MCF 10A (cell line): ENCODE measurements at regions of chr20 and their contacts with region 1.

Region 1: DNA sequence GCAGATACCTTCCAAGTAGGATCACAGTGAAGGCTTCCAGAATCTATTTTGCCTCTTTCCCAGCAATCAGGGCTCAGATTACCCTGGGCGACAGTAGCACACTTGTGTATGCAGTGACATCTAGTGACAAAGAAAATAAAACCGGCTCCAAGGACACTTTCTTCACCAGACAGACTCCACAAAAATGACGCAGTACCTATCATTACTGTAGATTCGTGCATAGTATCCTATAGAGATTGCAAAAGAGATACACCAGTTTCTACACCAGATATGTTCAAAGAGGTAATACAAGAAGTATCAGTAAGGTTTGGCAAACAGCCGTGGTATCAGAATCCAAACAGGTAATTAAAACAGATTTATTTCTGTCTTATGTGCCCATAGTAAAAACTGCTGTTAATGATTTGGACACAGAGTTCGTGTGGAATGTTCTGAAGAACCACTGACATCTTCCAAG is 600.4 kb upstream of the JAG1 start:
- DNase-seq: peak; percentile 78
- H3K4me3 Mint-ChIP-seq: no peak overlapping the region
- H3K27ac Mint-ChIP-seq: peak overlapping the region; percentile 29
- H3K4me1 Mint-ChIP-seq: peaks cover 6% of the 10 kb centered on the region
- H3K27me3 Mint-ChIP-seq: no peaks in the 10 kb centered on the region
- CTCF ChIP-seq: peak; percentile 59

Region 2: DNA sequence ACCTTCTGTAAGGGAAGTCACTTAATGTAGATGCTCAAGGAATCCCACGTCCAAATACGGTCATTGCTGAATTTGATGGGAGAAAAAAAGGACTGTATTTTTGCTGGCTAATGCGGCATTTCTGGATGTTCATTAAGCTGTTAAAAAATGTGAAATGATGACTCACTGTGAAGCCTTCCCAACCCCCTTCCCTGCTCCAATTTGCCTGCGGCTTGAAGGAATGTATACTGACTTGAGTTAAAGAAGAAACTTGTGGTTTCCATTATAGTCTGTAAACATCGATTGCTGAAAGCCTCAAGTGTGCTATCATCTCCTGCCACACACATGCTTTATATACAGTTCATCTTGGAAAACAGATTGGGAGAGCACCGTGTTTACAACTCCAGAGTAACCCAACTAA is 351.2 kb before region 1 on chr20:
- CTCF ChIA-PET with region 1: no interaction called
- POLR2A ChIA-PET with region 1: no interaction called
- intact Hi-C with region 1: loop called (anchors 10 kb)
- DNase-seq: peak; percentile 85
- H3K4me3 Mint-ChIP-seq: peak overlapping the region; percentile 24
- H3K27ac Mint-ChIP-seq: peak overlapping the region; percentile 50
- H3K4me1 Mint-ChIP-seq: peaks cover 46% of the 10 kb centered on the region
- H3K27me3 Mint-ChIP-seq: no peaks in the 10 kb centered on the region
- CTCF ChIP-seq: no peak

Region 3: DNA sequence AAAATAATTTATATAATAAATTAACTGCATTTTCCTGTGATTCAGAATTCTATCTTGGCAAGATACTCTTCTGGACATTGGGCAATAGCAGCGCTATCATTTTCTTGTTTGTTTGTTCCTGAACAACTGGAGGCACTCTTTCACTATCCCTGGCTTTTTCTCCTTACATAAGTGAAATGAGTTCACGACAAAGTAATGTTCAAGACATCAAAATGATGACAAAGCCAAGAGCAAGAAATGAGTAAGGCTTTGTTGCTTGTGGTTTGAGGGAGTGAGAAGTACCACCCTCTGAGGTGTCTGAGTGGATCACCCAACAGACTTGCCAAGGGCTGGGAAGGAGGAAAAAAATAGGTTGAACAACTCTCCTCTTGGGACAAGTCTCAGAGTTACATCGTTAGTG is 133.8 kb before region 1 on chr20:
- CTCF ChIA-PET with region 1: interaction called, 6 read pairs
- POLR2A ChIA-PET with region 1: no interaction called
- intact Hi-C with region 1: loop called (anchors 1 kb)
- DNase-seq: peak; percentile 84
- H3K4me3 Mint-ChIP-seq: no peak overlapping the region
- H3K27ac Mint-ChIP-seq: peak overlapping the region; percentile 29
- H3K4me1 Mint-ChIP-seq: peaks cover 6% of the 10 kb centered on the region
- H3K27me3 Mint-ChIP-seq: no peaks in the 10 kb centered on the region
- CTCF ChIP-seq: no peak